MCF 10A (cell line): ENCODE measurements at regions of chr2 and their contacts with region 1.

Region 1: GRCh38 chr2:199973703-199974102 is 18.3 kb downstream of the MAIP1 start:
- DNase-seq: peak; percentile 33
- H3K4me3 Mint-ChIP-seq: no peak overlapping the region
- H3K27ac Mint-ChIP-seq: no peak overlapping the region
- H3K4me1 Mint-ChIP-seq: peaks cover 25% of the 10 kb centered on the region
- H3K27me3 Mint-ChIP-seq: no peaks in the 10 kb centered on the region
- CTCF ChIP-seq: peak; percentile 56

Region 2: DNA sequence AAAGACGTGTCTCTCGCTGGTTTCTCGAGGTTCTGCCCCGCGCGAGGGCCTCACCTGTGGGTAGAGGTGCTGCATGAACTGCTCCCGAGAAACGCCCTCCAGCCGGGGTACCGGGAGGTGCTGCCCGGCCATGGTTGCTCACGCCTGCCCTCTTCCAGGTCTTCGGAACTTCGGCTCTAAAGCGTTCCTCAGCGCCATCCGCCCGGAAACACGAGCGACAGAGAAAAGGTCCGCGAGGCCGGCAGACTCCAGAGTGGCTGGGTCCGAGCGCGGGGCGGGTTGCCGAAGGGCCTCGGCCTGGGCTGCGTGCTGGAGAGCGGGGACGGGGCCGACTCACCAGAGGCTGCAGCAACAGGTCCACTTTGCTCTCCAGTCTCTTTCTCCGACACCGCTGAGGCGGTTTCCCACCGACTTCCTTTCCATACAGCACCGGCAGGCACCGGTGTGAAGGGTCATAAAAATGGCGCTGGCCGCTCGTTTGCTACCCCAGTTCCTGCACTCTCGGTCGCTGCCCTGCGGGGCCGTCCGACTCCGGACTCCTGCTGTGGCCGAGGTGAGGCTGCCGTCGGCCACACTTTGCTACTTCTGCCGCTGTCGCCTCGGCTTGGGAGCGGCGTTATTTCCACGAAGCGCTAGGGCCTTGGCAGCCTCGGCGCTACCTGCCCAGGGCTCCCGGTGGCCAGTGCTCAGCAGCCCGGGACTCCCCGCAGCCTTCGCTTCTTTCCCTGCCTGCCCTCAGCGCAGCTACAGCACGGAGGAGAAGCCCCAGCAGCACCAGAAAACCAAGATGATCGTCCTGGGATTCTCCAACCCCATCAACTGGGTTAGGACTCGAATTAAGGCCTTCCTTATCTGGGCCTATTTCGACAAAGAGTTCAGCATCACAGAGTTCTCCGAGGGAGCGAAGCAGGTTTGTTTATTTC is 18.1 kb before region 1 on chr2 and contains the starts of genes MAIP1 and TYW5:
- CTCF ChIA-PET with region 1: interaction called, 11 read pairs
- POLR2A ChIA-PET with region 1: interaction called, 3 read pairs
- intact Hi-C with region 1: no loop called
- DNase-seq: peak; percentile 87
- H3K4me3 Mint-ChIP-seq: peak within 1 kb of the TSS; percentile 99
- H3K27ac Mint-ChIP-seq: peak within 1 kb of the TSS; percentile 93
- H3K4me1 Mint-ChIP-seq: peaks cover 11% of the 10 kb centered on the region
- H3K27me3 Mint-ChIP-seq: no peaks in the 10 kb centered on the region
- CTCF ChIP-seq: no peak
- total RNA-seq, gene MAIP1: 17.7 and 24.1 TPM in 2 replicates
- total RNA-seq, gene TYW5: 9.7 and 11.1 TPM in 2 replicates

Region 3: DNA sequence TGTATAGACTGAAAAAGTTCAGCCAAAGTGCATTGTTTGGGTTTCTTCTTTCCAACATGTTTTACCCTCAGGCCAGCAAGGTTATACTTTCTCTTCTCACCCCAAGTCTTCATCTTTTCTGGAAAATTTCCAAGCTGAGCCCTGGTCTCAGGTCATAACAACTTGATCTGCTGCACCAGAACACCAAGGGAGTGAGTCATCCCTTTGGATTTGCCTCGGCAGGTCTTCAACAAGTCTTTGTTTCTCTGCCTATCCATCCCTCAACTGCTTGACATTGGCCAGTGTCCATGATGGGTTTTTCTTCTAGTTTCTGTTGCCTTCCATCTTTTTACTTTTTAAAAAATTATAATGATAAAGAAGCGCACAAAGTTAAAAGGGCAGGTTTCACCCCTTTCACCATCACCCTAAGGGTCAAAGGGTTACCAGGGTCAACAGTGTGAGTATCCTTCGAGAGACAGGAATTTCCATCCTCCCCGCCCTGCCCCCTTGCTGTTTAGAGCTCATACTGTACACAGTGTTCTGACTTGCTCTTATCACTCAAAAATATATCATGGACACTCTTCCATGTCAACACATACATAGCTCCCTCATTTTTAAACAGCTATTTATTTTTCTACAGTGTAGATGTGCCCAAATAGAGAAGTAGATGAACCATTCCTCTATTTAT is 327.1 kb after region 1 on chr2:
- CTCF ChIA-PET with region 1: interaction called, 5 read pairs
- POLR2A ChIA-PET with region 1: interaction called, 14 read pairs
- intact Hi-C with region 1: no loop called
- DNase-seq: peak; percentile 98
- H3K4me3 Mint-ChIP-seq: peak overlapping the region; percentile 10
- H3K27ac Mint-ChIP-seq: peak overlapping the region; percentile 11
- H3K4me1 Mint-ChIP-seq: peaks cover 40% of the 10 kb centered on the region
- H3K27me3 Mint-ChIP-seq: no peaks in the 10 kb centered on the region
- CTCF ChIP-seq: no peak

Region 4: DNA sequence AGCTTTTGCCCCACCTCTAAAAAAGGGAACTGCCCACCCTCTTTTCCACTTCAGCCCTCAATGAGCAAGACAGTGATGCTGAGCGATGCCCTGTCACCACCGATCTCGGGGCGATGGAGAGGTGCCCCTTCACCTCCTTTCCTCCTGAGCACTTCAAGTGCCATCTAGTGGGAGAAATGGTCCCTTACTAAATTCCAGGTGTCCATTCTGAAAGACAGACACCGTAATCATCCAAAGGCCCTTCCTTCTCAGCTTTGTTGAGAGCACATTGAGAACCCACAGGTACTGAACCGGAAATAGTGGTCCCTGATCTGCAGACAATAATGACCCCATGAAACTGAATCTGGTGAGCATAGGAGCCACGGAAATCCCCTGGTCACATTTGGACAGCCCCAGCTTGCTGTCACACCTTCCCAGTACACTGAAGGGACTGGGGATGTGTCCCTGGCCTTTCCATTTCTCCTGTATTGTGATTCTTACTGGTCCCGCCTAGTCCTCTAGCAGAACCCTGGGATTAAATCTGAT is 497.7 kb after region 1 on chr2:
- CTCF ChIA-PET with region 1: interaction called, 29 read pairs
- POLR2A ChIA-PET with region 1: interaction called, 3 read pairs
- intact Hi-C with region 1: no loop called
- DNase-seq: peak; percentile 36
- H3K4me3 Mint-ChIP-seq: no peak overlapping the region
- H3K27ac Mint-ChIP-seq: peak overlapping the region; percentile 11
- H3K4me1 Mint-ChIP-seq: no peaks in the 10 kb centered on the region
- H3K27me3 Mint-ChIP-seq: no peaks in the 10 kb centered on the region
- CTCF ChIP-seq: peak; percentile 45

Region 5: DNA sequence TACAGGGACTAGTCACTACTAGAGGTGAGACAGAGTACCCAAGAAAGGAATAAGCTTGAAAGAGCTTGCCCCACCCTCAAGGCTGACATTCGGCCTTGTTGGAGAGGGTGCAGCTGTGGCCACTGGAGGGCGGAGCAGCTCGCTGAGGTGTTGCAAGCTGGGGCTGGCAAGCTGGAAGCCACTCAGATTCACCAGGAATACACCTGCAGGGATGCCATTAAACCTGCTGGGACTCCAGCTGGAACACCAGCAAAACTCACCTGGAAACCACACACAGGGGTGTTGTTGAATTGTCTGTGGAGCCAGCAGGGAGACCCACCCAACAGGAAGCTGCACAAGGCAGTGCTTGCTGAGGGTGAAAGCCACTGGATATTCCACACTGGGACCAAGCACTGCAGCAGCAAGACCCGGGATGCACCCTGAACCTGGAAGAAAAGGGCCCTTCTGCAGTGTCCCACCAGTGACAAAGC is 510.1 kb after region 1 on chr2:
- CTCF ChIA-PET with region 1: interaction called, 239 read pairs
- POLR2A ChIA-PET with region 1: interaction called, 9 read pairs
- intact Hi-C with region 1: loop called (anchors 1 kb)
- DNase-seq: peak; percentile 63
- H3K4me3 Mint-ChIP-seq: no peak overlapping the region
- H3K27ac Mint-ChIP-seq: no peak overlapping the region
- H3K4me1 Mint-ChIP-seq: peaks cover 19% of the 10 kb centered on the region
- H3K27me3 Mint-ChIP-seq: no peaks in the 10 kb centered on the region
- CTCF ChIP-seq: peak; percentile 57

Region 6: DNA sequence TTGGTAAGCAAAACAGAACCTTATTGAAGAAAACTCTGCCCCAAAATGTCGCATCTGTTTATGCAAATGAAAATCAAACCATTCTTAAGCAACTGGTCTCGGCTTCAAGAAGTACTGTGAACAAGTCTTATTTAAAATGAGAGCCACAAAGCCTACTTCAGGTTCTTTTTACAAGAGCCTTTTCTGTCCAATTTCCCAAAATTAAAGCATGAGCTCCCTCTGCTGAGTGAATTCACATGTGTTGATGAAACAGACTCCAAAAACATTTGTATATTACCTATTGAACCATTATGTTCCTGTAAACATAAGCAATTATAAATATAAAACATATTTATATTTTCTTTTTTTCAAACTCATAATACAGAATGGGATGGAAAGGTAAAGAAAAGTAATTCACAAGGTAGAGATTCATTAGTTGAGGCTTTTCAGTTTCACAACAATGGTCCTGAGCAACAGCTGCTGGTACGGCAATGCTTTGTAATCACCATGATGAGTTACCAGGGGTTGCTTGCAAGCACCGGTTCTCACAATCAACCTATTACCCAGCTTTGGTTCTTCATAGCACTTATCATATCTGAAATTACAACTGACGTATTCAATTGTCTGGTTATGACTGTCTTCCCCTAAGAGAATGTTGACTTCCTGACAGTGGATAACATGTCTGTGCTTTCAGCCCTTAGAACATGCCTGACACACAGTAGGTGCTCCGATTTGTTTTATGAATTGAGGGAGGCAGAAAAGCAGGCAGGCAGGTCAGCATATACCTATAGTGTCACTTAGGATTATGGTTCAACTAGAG is 729.6 kb after region 1 on chr2:
- CTCF ChIA-PET with region 1: interaction called, 6 read pairs
- POLR2A ChIA-PET with region 1: interaction called, 4 read pairs
- intact Hi-C with region 1: loop called (anchors 2 kb)
- DNase-seq: peak; percentile 77
- H3K4me3 Mint-ChIP-seq: no peak overlapping the region
- H3K27ac Mint-ChIP-seq: no peak overlapping the region
- H3K4me1 Mint-ChIP-seq: peaks cover 2% of the 10 kb centered on the region
- H3K27me3 Mint-ChIP-seq: no peaks in the 10 kb centered on the region
- CTCF ChIP-seq: peak; percentile 66